ENCODE measurements at regions of chr18 and their contacts with region 1.

Region 1: DNA sequence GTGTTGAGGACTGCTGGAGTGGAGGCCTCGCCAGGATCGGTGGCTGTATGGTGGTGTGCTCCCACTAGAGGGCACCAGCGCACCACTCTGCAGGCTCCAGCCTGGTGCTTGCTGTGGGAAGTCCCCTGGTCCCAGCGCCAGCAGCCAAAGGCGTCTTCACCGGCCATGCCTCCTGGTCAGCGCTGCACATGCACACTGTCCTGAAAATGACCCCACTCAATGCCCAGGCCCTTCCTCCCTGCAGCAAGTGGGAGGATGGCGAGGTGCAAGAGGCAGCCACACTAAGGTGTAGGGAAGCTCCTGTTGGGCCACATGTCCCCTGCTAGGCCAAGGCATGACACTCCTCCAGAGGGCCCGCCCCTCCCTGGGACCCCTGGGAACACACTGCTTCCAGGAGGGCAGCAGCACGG is 136.5 kb downstream of the CTIF start:
- DNase-seq: peak; percentile 88 to 93
- ATAC-seq: peak; percentile 91 to 97 (median 95)
- H3K4me3 ChIP-seq: no peak overlapping the region
- H3K27ac ChIP-seq: peak overlapping the region; percentile 23
- H3K4me1 ChIP-seq: peaks cover 32% of the 10 kb centered on the region
- H3K27me3 ChIP-seq: no peaks in the 10 kb centered on the region
- CTCF ChIP-seq: peak; percentile 95

Region 2: GRCh38 chr18:48514786-48515185 is 160.6 kb before region 1 on chr18:
- intact Hi-C with region 1: no loop called
- DNase-seq: no peak
- ATAC-seq: no peak
- H3K4me3 ChIP-seq: no peak overlapping the region
- H3K27ac ChIP-seq: no peak overlapping the region
- H3K4me1 ChIP-seq: no peaks in the 10 kb centered on the region
- H3K27me3 ChIP-seq: no peaks in the 10 kb centered on the region
- CTCF ChIP-seq: no peak

Region 3: GRCh38 chr18:48754993-48755473 is 79.7 kb after region 1 on chr18:
- intact Hi-C with region 1: no loop called
- DNase-seq: peak in 1 of 2 donors; percentile 6
- ATAC-seq: no peak
- H3K4me3 ChIP-seq: no peak overlapping the region
- H3K27ac ChIP-seq: no peak overlapping the region
- H3K4me1 ChIP-seq: peaks cover 15% of the 10 kb centered on the region
- H3K27me3 ChIP-seq: no peaks in the 10 kb centered on the region
- CTCF ChIP-seq: no peak

Region 4: GRCh38 chr18:48951448-48952286 is 276.3 kb after region 1 on chr18:
- intact Hi-C with region 1: loop called (anchors 2 to 10 kb)
- DNase-seq: peak; percentile 92 to 94
- ATAC-seq: peak; percentile 69 to 77 (median 74)
- H3K4me3 ChIP-seq: peak overlapping the region; percentile 79
- H3K27ac ChIP-seq: peak overlapping the region; percentile 99
- H3K4me1 ChIP-seq: peaks cover 42% of the 10 kb centered on the region
- H3K27me3 ChIP-seq: no peaks in the 10 kb centered on the region
- CTCF ChIP-seq: peak; percentile 40

Region 5: DNA sequence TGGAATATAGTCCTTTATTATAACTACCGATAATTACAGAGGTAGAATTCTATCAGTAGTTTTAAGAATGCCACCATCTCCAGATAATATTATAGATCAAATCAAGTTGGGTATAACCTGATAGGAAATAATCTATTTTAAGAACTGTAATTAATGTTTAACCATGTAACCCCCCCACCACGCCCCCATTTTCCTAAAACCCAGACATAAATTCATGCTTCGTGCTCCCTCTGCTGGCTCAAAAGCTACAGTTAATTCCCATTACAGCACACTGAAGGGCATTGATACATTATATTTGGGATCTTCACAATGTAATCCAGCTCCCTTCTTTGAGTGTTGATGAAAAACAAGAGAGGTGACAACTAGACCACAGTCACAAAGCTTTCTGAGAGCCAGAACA is 503.4 kb after region 1 on chr18:
- intact Hi-C with region 1: loop called (anchors 5 kb)
- DNase-seq: no peak
- ATAC-seq: peak in 1 of 4 donors; percentile 42
- H3K4me3 ChIP-seq: no peak overlapping the region
- H3K27ac ChIP-seq: no peak overlapping the region
- H3K4me1 ChIP-seq: no peaks in the 10 kb centered on the region
- H3K27me3 ChIP-seq: no peaks in the 10 kb centered on the region
- CTCF ChIP-seq: peak; percentile 43

Region 6: DNA sequence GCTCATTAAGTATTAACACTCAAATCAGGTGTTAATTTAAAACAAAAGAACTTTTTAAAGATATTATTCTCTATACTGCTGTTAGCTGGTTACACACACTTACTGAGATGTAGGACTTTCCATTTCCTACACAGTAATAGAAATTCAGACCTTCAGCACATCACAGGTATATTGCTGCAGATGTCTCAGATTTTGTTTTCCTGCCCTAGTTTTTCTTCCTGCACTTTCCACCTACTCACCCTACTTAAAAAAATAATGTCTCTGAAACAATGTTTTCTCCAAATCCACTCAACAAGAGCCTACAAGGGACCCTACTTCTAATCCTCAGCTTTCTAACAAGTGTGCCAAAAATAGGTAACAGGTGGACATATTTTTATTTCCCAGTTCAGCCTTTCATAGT is 741.2 kb after region 1 on chr18:
- intact Hi-C with region 1: loop called in 1 of 2 experiments (anchors 5 kb)
- DNase-seq: no peak
- ATAC-seq: no peak
- H3K4me3 ChIP-seq: no peak overlapping the region
- H3K27ac ChIP-seq: no peak overlapping the region
- H3K4me1 ChIP-seq: no peaks in the 10 kb centered on the region
- H3K27me3 ChIP-seq: no peaks in the 10 kb centered on the region
- CTCF ChIP-seq: no peak

Region 7: GRCh38 chr18:49459404-49460171 is 784.2 kb after region 1 on chr18:
- intact Hi-C with region 1: loop called in 1 of 2 experiments (anchors 10 kb)
- DNase-seq: no peak
- ATAC-seq: no peak
- H3K4me3 ChIP-seq: peak overlapping the region; percentile 98
- H3K27ac ChIP-seq: peak overlapping the region; percentile 93
- H3K4me1 ChIP-seq: peaks cover 12% of the 10 kb centered on the region
- H3K27me3 ChIP-seq: no peaks in the 10 kb centered on the region
- CTCF ChIP-seq: no peak

Measured in psoas muscle (tissue), 8 donors.